T-cell (primary cell): ENCODE measurements at regions of chr3 and their contacts with region 1.

Region 1: DNA sequence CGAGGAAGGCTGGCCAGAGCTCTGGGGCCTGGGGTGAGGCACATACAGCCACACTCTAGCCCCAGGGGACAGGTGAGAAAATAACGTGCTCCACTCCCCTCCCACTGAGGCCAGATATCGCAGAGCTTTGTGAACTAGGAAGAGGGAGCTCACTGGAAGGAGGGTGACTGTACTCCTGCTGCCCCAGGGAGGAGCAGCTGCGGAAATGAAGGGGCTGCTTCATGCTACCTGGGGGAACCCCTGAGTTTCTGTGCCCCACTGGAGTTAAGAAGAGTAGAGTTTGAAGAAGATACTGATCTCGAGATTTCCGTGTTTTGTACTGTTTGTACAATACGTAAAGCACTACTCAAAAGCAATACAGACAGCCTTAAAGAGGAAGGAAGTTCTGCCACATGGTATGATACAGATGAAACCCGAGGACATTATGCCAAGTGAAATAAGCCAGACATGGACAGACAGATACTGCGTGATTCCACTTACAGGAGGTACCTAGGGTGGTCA is 44.6 kb downstream of the CMTM6 start:
- DNase-seq: peak; percentile 30 to 89 (median 72)
- ATAC-seq: peak; percentile 68 to 77 (median 71)
- H3K4me3 ChIP-seq: peak overlapping the region; percentile 16 to 28
- H3K4me3 Mint-ChIP-seq: peak overlapping the region; percentile 54 to 78 (median 56)
- H3K27ac ChIP-seq: peak overlapping the region; percentile 94
- H3K27ac Mint-ChIP-seq: peak overlapping the region in 1 of 2 donors; percentile 97
- H3K4me1 ChIP-seq: peaks cover 58 to 88% of the 10 kb centered on the region in 2 experiments
- H3K4me1 Mint-ChIP-seq: peaks cover 48 to 54% (median 53%) of the 10 kb centered on the region in 3 donors
- H3K27me3 ChIP-seq: no peaks in the 10 kb centered on the region
- H3K27me3 Mint-ChIP-seq: no peaks in the 10 kb centered on the region

Region 2: GRCh38 chr3:32384938-32385337 is 73.1 kb before region 1 on chr3:
- CTCF ChIA-PET with region 1: no interaction called
- POLR2A ChIA-PET with region 1: no interaction called
- DNase-seq: no peak
- ATAC-seq: no peak
- H3K4me3 ChIP-seq: no peak overlapping the region
- H3K4me3 Mint-ChIP-seq: no peak overlapping the region
- H3K27ac ChIP-seq: no peak overlapping the region
- H3K27ac Mint-ChIP-seq: no peak overlapping the region
- H3K4me1 ChIP-seq: peaks cover 0 to under 1% of the 10 kb centered on the region in 2 experiments
- H3K4me1 Mint-ChIP-seq: peaks cover 0 to 16% (median 16%) of the 10 kb centered on the region in 3 donors
- H3K27me3 ChIP-seq: no peaks in the 10 kb centered on the region
- H3K27me3 Mint-ChIP-seq: no peaks in the 10 kb centered on the region

Region 3: GRCh38 chr3:32420126-32421038 is 37.6 kb before region 1 on chr3:
- CTCF ChIA-PET with region 1: interaction called, 4 to 11 read pairs
- POLR2A ChIA-PET with region 1: interaction called, 3 to 6 read pairs
- DNase-seq: peak in 2 of 35 experiments; percentile 35 to 44
- ATAC-seq: peak; percentile 42 to 59 (median 52)
- H3K4me3 ChIP-seq: peak overlapping the region in 1 of 2 donors; percentile 52
- H3K4me3 Mint-ChIP-seq: peak overlapping the region; percentile 49 to 70 (median 67)
- H3K27ac ChIP-seq: peak overlapping the region; percentile 65
- H3K27ac Mint-ChIP-seq: peak overlapping the region; percentile 94 to 98
- H3K4me1 ChIP-seq: peaks cover 55 to 56% of the 10 kb centered on the region in 2 experiments
- H3K4me1 Mint-ChIP-seq: peaks cover 95 to 98% (median 97%) of the 10 kb centered on the region in 3 donors
- H3K27me3 ChIP-seq: no peaks in the 10 kb centered on the region
- H3K27me3 Mint-ChIP-seq: no peaks in the 10 kb centered on the region